ENCODE measurements at regions of chr1 and their contacts with region 1.

Region 1: DNA sequence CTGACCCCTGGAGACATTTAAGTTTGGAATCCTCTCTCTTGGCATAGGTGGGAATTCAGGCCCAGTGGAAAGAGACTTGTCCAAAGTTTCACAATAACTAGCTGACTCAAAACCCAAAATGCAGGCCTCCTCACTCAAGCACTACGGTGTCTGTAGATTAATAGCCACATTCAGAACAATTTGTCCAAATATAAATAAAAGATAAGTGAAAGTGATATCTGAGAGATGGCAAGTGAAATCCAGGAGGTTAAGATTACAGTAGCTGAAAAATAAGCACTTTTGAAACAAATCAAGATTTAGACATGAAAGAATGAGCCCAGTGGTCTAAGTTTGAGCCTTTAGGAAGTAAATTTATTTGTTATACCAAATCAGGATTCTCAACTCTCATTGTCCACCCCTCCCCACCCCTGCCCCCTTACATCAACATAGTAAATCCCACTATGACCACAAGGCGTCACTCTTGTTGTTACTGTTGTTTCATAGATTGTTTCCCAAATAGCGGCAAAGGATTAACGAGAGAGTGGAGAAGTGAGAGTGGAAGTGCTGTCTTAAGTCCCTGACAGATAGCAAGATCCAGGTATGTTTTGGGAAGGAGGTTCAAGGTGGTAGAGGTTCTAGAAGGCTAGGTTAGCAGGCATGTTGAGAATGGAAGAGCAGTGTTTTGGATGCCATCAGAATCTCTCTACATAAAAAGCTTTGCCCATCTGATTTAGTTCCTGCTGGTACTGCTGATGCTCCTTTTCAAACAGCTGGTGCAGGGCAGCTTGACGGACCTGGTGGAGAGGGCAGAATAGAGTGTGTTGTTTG is 7.1 kb upstream of the TPM3 start:
- DNase-seq: no peak
- H3K4me3 ChIP-seq: no peak overlapping the region
- H3K27ac ChIP-seq: peak overlapping the region in 1 of 4 donors; percentile 20
- H3K4me1 ChIP-seq: peaks cover 0 to 6% (median 0%) of the 10 kb centered on the region in 4 donors
- H3K27me3 ChIP-seq: peaks cover 3% of the 10 kb centered on the region
- CTCF ChIP-seq: peak; percentile 45 to 50 (median 48)
- EP300 ChIP-seq: no peak
- POLR2A ChIP-seq: no peak

Region 2: GRCh38 chr1:154263465-154264332 is 64.7 kb after region 1 on chr1:
- in situ Hi-C with region 1: loop called in 1 of 4 experiments (anchors 10 kb)
- intact Hi-C with region 1: no loop called
- DNase-seq: no peak
- H3K4me3 ChIP-seq: no peak overlapping the region
- H3K27ac ChIP-seq: no peak overlapping the region
- H3K4me1 ChIP-seq: no peaks in the 10 kb centered on the region
- H3K27me3 ChIP-seq: no peaks in the 10 kb centered on the region
- CTCF ChIP-seq: no peak
- EP300 ChIP-seq: no peak
- POLR2A ChIP-seq: no peak

Region 3: DNA sequence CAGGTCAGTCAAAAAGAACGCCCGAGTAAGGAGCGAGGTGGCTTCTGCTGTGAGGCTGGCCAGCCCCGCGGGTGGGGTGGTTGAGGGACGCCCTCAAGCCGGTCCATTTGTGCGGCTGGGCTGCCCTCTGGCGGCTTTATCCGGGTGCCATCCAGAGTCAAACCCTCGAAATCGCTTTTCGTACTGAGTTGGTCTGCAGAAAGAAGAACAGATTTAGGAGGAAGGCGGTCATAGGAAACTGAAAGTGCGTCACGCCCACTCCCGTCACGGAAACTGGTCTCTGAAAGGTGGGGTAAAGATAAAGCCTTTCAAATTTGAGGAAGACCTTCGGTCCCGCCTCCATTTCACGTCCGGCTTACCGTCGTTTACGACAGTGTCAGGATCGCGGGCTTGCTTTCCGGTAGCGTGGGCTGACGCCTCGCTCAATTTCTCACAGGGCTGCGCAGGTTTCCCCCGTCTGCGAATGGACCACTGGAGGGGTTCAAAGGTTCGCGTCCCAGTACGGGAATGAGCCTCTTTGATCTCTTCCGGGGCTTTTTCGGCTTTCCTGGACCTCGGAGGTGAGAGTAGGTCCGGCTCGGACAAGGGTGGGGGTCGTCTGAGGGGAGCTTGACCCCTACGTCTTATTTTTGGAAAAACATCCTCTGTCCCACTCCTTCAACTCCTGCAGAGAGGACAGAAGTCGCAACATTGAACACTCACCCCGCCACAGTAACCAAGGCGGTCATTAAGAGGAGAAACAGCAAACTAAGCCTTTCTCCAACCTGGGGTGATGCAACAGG is 73.4 kb after region 1 on chr1 and contains the start of gene HAX1:
- in situ Hi-C with region 1: loop called in 2 of 4 experiments (anchors 10 kb)
- intact Hi-C with region 1: no loop called
- DNase-seq: peak; percentile 96
- H3K4me3 ChIP-seq: peak within 1 kb of the TSS; percentile 59 to 98 (median 82)
- H3K27ac ChIP-seq: peak within 1 kb of the TSS; percentile 87 to 98 (median 92)
- H3K4me1 ChIP-seq: peaks cover 10 to 23% (median 13%) of the 10 kb centered on the region in 4 donors
- H3K27me3 ChIP-seq: no peaks in the 10 kb centered on the region
- CTCF ChIP-seq: peak; percentile 59 to 92 (median 69)
- EP300 ChIP-seq: peak; percentile 37
- POLR2A ChIP-seq: peak; percentile 79
- total RNA-seq, gene HAX1: 44.5 to 87.1 (median 74.1) TPM

Region 4: DNA sequence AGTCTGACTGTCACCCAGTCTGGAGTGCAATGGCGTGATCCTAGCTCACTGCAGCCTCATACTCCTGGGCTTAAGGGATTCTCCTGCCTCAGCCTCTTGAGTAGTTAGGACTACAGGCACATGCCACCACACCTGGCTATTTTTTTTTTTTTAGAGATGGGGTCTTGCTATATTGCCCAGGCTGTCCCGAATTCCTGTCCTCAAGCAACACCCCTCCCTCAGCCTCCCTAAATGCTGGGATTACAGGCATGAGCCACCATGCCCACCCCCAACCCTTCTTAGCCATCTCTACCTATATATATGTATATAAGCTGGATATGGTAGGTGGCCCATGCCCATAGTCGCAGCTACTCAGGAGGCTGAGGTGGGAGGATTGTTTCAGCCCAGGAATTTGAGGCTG is 1981.5 kb after region 1 on chr1:
- in situ Hi-C with region 1: no loop called
- intact Hi-C with region 1: loop called (anchors 10 kb)
- DNase-seq: no peak
- H3K4me3 ChIP-seq: no peak overlapping the region
- H3K27ac ChIP-seq: no peak overlapping the region
- H3K4me1 ChIP-seq: peaks cover 0 to 6% (median 2%) of the 10 kb centered on the region in 4 donors
- H3K27me3 ChIP-seq: no peaks in the 10 kb centered on the region
- CTCF ChIP-seq: no peak
- EP300 ChIP-seq: no peak
- POLR2A ChIP-seq: no peak